ENCODE measurements at regions of chr6 and their contacts with region 1.

Region 1: DNA sequence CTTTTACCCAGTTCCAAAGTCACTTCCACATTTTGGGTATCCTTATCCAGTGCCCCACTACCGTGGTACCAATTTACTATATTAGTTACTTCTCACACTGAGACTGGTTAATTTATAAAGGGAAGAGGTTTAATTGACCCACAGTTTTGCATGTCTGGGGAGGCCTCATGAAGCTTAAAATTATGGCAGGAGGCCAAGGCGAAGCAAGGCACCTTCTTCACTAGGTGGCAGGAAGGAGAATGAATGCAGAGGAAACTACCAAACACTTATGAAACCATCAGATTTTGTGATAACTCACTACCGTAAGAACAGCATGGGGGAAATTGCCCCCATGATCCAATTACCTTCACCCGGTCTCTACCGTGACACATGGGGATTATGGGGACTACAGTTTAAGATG is 106.7 kb upstream of the SAMD5 start:
- DNase-seq: no peak
- ATAC-seq: no peak
- H3K4me3 ChIP-seq: no peak overlapping the region
- H3K27ac ChIP-seq: no peak overlapping the region
- H3K4me1 ChIP-seq: no peaks in the 10 kb centered on the region
- H3K27me3 ChIP-seq: no peaks in the 10 kb centered on the region; a peak in 1 of 5 replicates
- CTCF ChIP-seq: no peak
- EP300 ChIP-seq: no peak
- POLR2A ChIP-seq: no peak
- RAD21 ChIP-seq: no peak

Region 2: GRCh38 chr6:146670161-146670560 is 731.6 kb before region 1 on chr6:
- CTCF ChIA-PET with region 1: no interaction called
- POLR2A ChIA-PET with region 1: no interaction called
- in situ Hi-C with region 1: no loop called
- intact Hi-C with region 1: no loop called
- DNase-seq: no peak
- ATAC-seq: no peak
- H3K4me3 ChIP-seq: no peak overlapping the region
- H3K27ac ChIP-seq: no peak overlapping the region
- H3K4me1 ChIP-seq: no peaks in the 10 kb centered on the region
- H3K27me3 ChIP-seq: no peaks in the 10 kb centered on the region
- CTCF ChIP-seq: no peak
- EP300 ChIP-seq: no peak
- POLR2A ChIP-seq: no peak
- RAD21 ChIP-seq: no peak

Region 3: GRCh38 chr6:147347882-147348575 is 53.8 kb before region 1 on chr6:
- CTCF ChIA-PET with region 1: no interaction called
- POLR2A ChIA-PET with region 1: no interaction called
- in situ Hi-C with region 1: no loop called
- intact Hi-C with region 1: loop called (anchors 1 kb)
- DNase-seq: no peak
- ATAC-seq: no peak
- H3K4me3 ChIP-seq: no peak overlapping the region
- H3K27ac ChIP-seq: no peak overlapping the region
- H3K4me1 ChIP-seq: no peaks in the 10 kb centered on the region
- H3K27me3 ChIP-seq: no peaks in the 10 kb centered on the region
- CTCF ChIP-seq: no peak
- EP300 ChIP-seq: no peak
- POLR2A ChIP-seq: no peak
- RAD21 ChIP-seq: no peak